ENCODE measurements at regions of chr10 and their contacts with region 1.

Region 1: DNA sequence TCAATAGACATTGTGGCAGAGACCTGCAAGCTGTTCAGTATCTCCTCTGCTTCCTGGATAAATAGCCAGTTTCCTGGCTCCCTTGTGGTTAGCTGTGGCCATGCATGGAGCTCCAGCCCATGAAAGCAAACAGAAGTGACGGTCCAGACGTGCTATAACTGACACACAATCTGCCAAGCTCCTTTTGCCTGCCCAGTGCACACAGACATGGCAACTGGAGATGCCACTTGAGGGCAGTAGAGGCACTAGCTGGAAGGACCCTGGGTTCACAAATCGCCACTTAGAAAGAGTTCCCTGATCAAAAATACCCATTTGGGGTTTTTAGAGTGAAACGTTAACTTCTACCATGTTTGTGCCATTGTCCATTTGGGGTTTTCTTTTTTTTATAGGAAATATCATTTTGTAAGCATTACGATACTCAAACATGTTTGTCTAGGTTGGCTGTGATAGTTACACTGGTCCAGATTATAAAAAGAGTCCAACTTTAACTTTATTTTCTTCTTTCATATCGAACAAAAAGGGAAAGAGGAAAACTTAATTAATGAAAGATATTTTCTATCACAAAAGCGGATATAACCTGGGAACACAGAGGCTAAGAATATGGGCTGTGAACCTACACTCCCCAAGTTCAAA is 31.3 kb downstream of the KIN start:
- DNase-seq: peak; percentile 41
- H3K4me3 ChIP-seq: no peak overlapping the region
- H3K27ac ChIP-seq: no peak overlapping the region
- H3K4me1 ChIP-seq: no peaks in the 10 kb centered on the region
- CTCF ChIP-seq: peak; percentile 82

Region 2: DNA sequence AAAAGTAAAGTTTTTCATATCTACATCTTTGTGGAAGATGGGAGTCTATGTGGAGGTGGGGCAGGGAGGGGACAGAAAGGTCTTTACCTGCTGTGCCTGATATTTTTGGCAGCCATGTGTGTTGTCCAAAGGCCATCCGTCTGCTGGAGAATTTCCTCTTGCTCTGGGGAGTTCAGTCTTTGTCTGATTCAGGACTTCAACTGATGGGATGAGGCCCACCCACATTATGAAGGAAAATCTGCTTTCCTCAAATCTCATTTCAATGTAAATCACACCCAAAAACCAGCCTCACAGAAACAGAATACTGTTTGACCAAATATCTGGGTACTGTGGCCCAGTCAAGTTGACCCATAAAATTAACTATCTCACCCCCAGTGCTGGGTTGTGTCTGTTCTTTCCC is 77.2 kb before region 1 on chr10:
- CTCF ChIA-PET with region 1: no interaction called
- POLR2A ChIA-PET with region 1: interaction called, 10 read pairs
- intact Hi-C with region 1: no loop called
- DNase-seq: no peak
- H3K4me3 ChIP-seq: no peak overlapping the region
- H3K27ac ChIP-seq: no peak overlapping the region
- H3K4me1 ChIP-seq: no peaks in the 10 kb centered on the region
- CTCF ChIP-seq: no peak

Region 3: DNA sequence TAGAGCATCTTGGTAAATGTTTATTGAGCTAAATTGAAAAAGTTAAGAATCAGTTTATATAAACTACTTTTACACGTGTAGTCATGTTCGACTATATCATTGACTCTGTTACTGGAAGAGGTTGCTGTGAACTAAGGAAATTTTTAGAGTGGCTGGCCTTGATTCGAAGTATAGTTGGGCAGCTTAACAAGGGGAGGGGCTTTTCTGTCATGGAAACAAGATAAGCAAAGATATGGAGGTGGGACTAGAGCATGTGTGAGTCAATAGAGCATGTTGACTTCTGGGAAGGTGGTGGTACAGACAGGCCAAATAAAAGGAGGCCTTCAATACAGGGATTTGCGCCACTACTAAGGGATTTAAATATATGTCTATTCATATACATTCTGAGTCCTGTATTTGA is 39.1 kb after region 1 on chr10:
- CTCF ChIA-PET with region 1: no interaction called
- POLR2A ChIA-PET with region 1: no interaction called
- intact Hi-C with region 1: no loop called
- DNase-seq: no peak
- H3K4me3 ChIP-seq: no peak overlapping the region
- H3K27ac ChIP-seq: no peak overlapping the region
- H3K4me1 ChIP-seq: peaks cover 4% of the 10 kb centered on the region
- CTCF ChIP-seq: no peak

Region 4: DNA sequence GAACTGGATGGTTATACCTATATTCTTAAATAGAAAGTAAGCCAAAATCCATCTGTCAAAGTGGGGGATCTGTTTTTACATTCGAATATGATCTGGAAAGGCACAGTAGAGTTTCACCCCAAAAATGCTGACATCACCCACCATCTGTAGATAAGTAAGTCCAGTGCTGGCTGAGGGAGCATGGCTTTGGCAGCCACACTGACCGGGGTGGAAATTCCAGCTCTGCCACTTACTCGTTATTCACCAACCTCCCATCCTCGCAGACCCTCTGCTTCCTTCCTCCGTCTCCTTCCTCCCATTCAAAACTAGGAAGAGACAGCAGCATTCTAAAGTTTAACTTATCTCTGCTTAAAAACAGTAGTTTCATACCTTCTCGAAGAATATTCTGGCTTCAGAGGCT is 213.1 kb after region 1 on chr10:
- CTCF ChIA-PET with region 1: no interaction called
- POLR2A ChIA-PET with region 1: no interaction called
- intact Hi-C with region 1: loop called (anchors 10 kb)
- DNase-seq: no peak
- H3K4me3 ChIP-seq: no peak overlapping the region
- H3K27ac ChIP-seq: no peak overlapping the region
- H3K4me1 ChIP-seq: no peaks in the 10 kb centered on the region
- CTCF ChIP-seq: no peak

Measured in OCI-LY7 (cell line).